ENCODE measurements at regions of chr22 and their contacts with region 1.

Region 1: GRCh38 chr22:37696657-37697537 is at the start of gene TRIOBP:
- DNase-seq: peak; percentile 89
- ATAC-seq: peak; percentile 99
- H3K4me3 Mint-ChIP-seq: peak within 1 kb of the TSS; percentile 13
- H3K27ac Mint-ChIP-seq: no peak within 1 kb of the TSS
- H3K4me1 Mint-ChIP-seq: peaks cover 14% of the 10 kb centered on the region
- H3K27me3 Mint-ChIP-seq: no peaks in the 10 kb centered on the region
- total RNA-seq, gene TRIOBP: 42.0 to 55.2 TPM

Region 2: DNA sequence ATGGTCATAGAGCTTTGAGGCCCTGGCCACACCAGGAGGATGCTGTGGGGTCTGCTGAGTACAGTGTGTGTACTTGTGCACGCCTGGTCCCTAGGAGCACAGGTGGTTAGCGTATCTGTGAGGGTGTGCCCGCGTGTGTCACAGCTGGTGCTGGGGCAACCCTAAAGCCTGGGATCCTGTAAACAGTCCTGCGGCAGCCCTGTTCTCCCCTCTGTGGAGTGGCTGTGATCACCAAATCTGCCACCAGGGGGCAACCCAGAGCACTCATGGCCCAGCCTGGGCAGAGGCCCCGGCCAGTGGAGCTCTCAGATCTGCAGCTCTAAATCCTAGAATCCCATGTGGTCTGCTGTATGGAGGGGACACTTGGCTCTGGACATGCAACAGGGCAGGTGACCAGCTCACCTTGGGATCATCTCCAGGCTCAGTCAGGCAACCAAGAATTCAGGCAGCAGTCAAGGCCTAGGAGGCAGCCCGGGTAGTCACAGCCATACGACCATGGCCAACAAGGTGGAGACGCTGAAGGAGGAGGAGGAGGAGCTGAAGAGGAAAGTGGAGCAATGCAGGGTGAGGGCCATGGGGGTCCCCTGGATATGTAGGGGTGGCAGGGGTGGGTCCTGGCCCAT is 53.6 kb before region 1 on chr22:
- CTCF ChIA-PET with region 1: interaction called, 10 read pairs
- DNase-seq: peak; percentile 90
- ATAC-seq: peak; percentile 52
- H3K4me3 Mint-ChIP-seq: peak overlapping the region; percentile 35
- H3K27ac Mint-ChIP-seq: peak overlapping the region; percentile 48
- H3K4me1 Mint-ChIP-seq: peaks cover 38% of the 10 kb centered on the region
- H3K27me3 Mint-ChIP-seq: no peaks in the 10 kb centered on the region

Measured in activated CD8-positive, alpha-beta memory T cell treated with anti-CD3 and anti-CD28 coated beads, Interleukin-2, amount 10 ng/mL, durations not matched to agents 7 days and 5 days (primary cell).